ENCODE measurements at regions of chr18 and their contacts with region 1.

Region 1: GRCh38 chr18:9971313-9971920 is 57.6 kb downstream of the VAPA start:
- DNase-seq: peak; percentile 89 to 93
- H3K4me3 ChIP-seq: no peak overlapping the region
- CTCF ChIP-seq: peak in 1 of 3 donors; percentile 81
- POLR2A ChIP-seq: no peak

Region 2: DNA sequence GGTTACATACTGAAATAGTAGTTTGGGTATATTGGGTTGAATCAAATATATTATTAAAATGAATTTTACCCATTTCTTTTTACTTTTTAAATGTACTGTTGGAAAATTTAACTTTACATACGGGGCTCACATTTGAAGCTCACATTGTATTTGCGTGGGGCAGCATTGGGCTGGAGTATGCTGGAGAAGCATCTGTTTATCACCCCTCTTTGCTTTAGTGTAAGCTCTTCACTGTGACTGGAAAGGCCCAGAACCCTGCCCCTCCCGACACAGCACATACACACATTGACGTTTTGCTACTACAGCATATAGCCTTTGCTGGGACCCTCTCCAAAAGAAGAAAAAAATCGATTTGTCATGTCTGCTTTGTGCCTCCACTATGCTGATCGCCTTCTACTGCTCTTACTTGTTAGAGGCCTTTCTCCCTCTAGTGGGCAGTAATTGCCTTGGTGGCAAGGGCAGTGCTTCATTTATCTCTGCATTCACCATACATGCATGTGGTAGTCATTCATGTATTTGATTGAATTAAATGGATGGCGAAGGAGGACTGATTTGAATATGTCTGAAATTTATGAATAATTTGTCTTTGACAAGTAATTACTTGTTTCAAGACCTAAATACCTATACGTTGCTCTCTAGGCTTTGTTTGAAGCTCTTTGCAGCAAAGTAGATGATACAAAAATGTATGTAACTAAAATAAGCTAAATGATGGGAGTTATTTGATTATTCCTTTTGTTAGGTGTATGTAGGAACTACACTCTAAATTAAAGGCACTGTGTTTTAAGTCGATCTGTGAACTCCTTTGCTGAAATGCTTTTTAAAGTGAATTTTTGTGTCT is 20.2 kb before region 1 on chr18:
- intact Hi-C with region 1: no loop called
- DNase-seq: no peak
- H3K4me3 ChIP-seq: no peak overlapping the region
- CTCF ChIP-seq: no peak
- POLR2A ChIP-seq: no peak

Region 3: GRCh38 chr18:10519999-10520935 is 548.9 kb after region 1 on chr18:
- intact Hi-C with region 1: loop called (anchors 1 kb)
- DNase-seq: peak; percentile 91 to 95
- H3K4me3 ChIP-seq: no peak overlapping the region
- CTCF ChIP-seq: no peak
- POLR2A ChIP-seq: no peak

Measured in lower leg skin (tissue), 4 donors.